H1 (cell line): ENCODE measurements at regions of chr3 and their contacts with region 1.

Region 1: GRCh38 chr3:77320514-77320913 is 280.6 kb downstream of the ROBO2 start:
- DNase-seq: no peak
- H3K4me3 ChIP-seq: no peak overlapping the region
- H3K27ac ChIP-seq: no peak overlapping the region
- H3K4me1 ChIP-seq: peaks cover 0 to 5% (median 0%) of the 10 kb centered on the region in 4 experiments; a peak in 1 of 7 replicates
- H3K27me3 ChIP-seq: no peaks in the 10 kb centered on the region
- CTCF ChIP-seq: peak in 2 of 3 experiments; percentile 35 to 39; a peak in 2 of 4 replicates
- EP300 ChIP-seq: no peak
- POLR2A ChIP-seq: no peak
- RAD21 ChIP-seq: peak in 1 of 2 experiments; percentile 39

Region 2: DNA sequence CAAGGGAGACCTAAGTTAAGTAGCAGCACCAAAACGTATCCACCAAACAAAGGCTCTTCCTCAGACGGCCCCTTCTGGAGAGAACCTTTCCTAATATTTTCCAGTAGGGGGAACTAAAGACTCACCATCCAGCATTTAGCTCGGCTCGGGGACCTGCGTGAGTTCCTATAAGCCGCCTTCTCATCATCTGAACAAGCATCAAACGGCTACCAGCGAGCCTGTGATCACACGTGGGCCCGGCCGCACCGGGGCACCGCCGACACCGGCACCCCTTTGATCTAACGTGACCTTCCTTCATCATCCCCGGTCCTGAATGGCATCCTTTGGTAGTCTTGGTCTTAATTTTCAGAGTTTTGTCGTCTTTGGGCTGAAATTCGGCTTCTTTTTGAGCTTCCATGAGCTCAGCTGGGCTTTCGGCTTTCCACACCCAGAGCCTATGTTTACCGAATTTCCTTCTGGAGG is 282.0 kb before region 1 on chr3:
- CTCF ChIA-PET with region 1: interaction called, 17 read pairs
- POLR2A ChIA-PET with region 1: no interaction called
- DNase-seq: peak; percentile 64 to 72
- H3K4me3 ChIP-seq: peak overlapping the region; percentile 78 to 89 (median 82)
- H3K27ac ChIP-seq: no peak overlapping the region
- H3K4me1 ChIP-seq: peaks cover 0 to 9% (median 5%) of the 10 kb centered on the region in 4 experiments; a peak in 5 of 7 replicates
- H3K27me3 ChIP-seq: peaks cover 0 to 6% (median 5%) of the 10 kb centered on the region in 4 experiments; a peak in 5 of 7 replicates
- CTCF ChIP-seq: peak; percentile 5 to 81 (median 68)
- EP300 ChIP-seq: peak in 1 of 2 experiments; percentile 30; a peak in 1 of 3 replicates
- POLR2A ChIP-seq: no peak
- RAD21 ChIP-seq: peak; percentile 89 to 96

Region 3: DNA sequence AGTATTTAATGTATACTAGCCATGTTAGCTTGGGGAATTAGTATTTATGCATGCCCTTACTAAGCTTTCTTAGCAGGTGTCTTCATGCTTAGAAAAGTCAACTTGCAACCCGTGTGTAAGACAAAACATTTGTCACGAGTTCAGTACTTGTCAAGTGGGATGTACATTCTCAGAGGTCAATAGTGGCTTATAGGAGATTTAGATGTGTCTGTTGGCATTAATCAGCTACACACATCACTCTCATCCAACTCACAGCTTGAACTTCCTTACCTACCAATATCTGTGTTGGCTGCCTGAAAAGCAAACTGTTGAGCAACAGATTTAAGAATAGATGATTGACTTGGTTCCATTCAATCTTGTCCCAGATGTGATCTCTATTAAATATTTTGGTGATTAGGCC is 171.1 kb before region 1 on chr3:
- CTCF ChIA-PET with region 1: no interaction called
- POLR2A ChIA-PET with region 1: no interaction called
- DNase-seq: no peak
- H3K4me3 ChIP-seq: no peak overlapping the region
- H3K27ac ChIP-seq: no peak overlapping the region
- H3K4me1 ChIP-seq: peaks cover 0 to 18% (median 9%) of the 10 kb centered on the region in 4 experiments; a peak in 5 of 7 replicates
- H3K27me3 ChIP-seq: no peaks in the 10 kb centered on the region
- CTCF ChIP-seq: no peak
- EP300 ChIP-seq: no peak
- POLR2A ChIP-seq: no peak
- RAD21 ChIP-seq: no peak

Region 4: GRCh38 chr3:77296527-77296926 is 24.0 kb before region 1 on chr3:
- CTCF ChIA-PET with region 1: interaction called, 11 read pairs
- POLR2A ChIA-PET with region 1: no interaction called
- DNase-seq: no peak
- H3K4me3 ChIP-seq: no peak overlapping the region
- H3K27ac ChIP-seq: no peak overlapping the region
- H3K4me1 ChIP-seq: no peaks in the 10 kb centered on the region
- H3K27me3 ChIP-seq: no peaks in the 10 kb centered on the region
- CTCF ChIP-seq: no peak
- EP300 ChIP-seq: no peak
- POLR2A ChIP-seq: no peak
- RAD21 ChIP-seq: no peak

Region 5: GRCh38 chr3:77309460-77309859 is 11.1 kb before region 1 on chr3:
- CTCF ChIA-PET with region 1: interaction called, 27 read pairs
- POLR2A ChIA-PET with region 1: no interaction called
- DNase-seq: no peak
- H3K4me3 ChIP-seq: no peak overlapping the region
- H3K27ac ChIP-seq: no peak overlapping the region
- H3K4me1 ChIP-seq: no peaks in the 10 kb centered on the region
- H3K27me3 ChIP-seq: peaks cover 0 to 1% (median 0%) of the 10 kb centered on the region in 4 experiments; a peak in 1 of 7 replicates
- CTCF ChIP-seq: no peak
- EP300 ChIP-seq: no peak
- POLR2A ChIP-seq: no peak
- RAD21 ChIP-seq: no peak

Region 6: GRCh38 chr3:77348231-77348855 is 27.8 kb after region 1 on chr3:
- CTCF ChIA-PET with region 1: interaction called, 19 read pairs
- POLR2A ChIA-PET with region 1: no interaction called
- DNase-seq: peak; percentile 50 to 59
- H3K4me3 ChIP-seq: no peak overlapping the region
- H3K27ac ChIP-seq: no peak overlapping the region
- H3K4me1 ChIP-seq: peaks cover 0 to 8% (median 4%) of the 10 kb centered on the region in 4 experiments; a peak in 2 of 7 replicates
- H3K27me3 ChIP-seq: no peaks in the 10 kb centered on the region
- CTCF ChIP-seq: peak; percentile 34 to 75 (median 72)
- EP300 ChIP-seq: no peak
- POLR2A ChIP-seq: no peak
- RAD21 ChIP-seq: peak; percentile 81 to 82

Region 7: GRCh38 chr3:77506384-77506783 is 185.9 kb after region 1 on chr3:
- CTCF ChIA-PET with region 1: no interaction called
- POLR2A ChIA-PET with region 1: no interaction called
- DNase-seq: no peak
- H3K4me3 ChIP-seq: no peak overlapping the region
- H3K27ac ChIP-seq: no peak overlapping the region
- H3K4me1 ChIP-seq: peaks cover 0 to 3% (median 0%) of the 10 kb centered on the region in 4 experiments; a peak in 3 of 7 replicates
- H3K27me3 ChIP-seq: no peaks in the 10 kb centered on the region
- CTCF ChIP-seq: peak in 2 of 3 experiments; percentile 14 to 31; a peak in 1 of 4 replicates
- EP300 ChIP-seq: no peak
- POLR2A ChIP-seq: no peak
- RAD21 ChIP-seq: peak; percentile 40 to 67